ENCODE measurements at regions of chr11 and their contacts with region 1.

Region 1: GRCh38 chr11:10413268-10413667 is 41.8 kb upstream of the AMPD3 start:
- DNase-seq: no peak
- H3K4me3 ChIP-seq: no peak overlapping the region
- H3K27ac ChIP-seq: peak overlapping the region in 1 of 2 donors; percentile 14
- H3K4me1 ChIP-seq: no peaks in the 10 kb centered on the region
- H3K27me3 ChIP-seq: no peaks in the 10 kb centered on the region
- CTCF ChIP-seq: no peak
- POLR2A ChIP-seq: no peak

Region 2: GRCh38 chr11:10514210-10514609 is 100.9 kb after region 1 on chr11:
- intact Hi-C with region 1: loop called (anchors 10 kb)
- DNase-seq: no peak
- H3K4me3 ChIP-seq: no peak overlapping the region
- H3K27ac ChIP-seq: no peak overlapping the region
- H3K4me1 ChIP-seq: no peaks in the 10 kb centered on the region
- H3K27me3 ChIP-seq: no peaks in the 10 kb centered on the region
- CTCF ChIP-seq: peak in 1 of 3 donors; percentile 22
- POLR2A ChIP-seq: no peak

Region 3: GRCh38 chr11:10727146-10727851 is 314.0 kb after region 1 on chr11:
- intact Hi-C with region 1: loop called (anchors 2 kb)
- DNase-seq: no peak
- H3K4me3 ChIP-seq: no peak overlapping the region
- H3K27ac ChIP-seq: no peak overlapping the region
- H3K4me1 ChIP-seq: no peaks in the 10 kb centered on the region
- H3K27me3 ChIP-seq: no peaks in the 10 kb centered on the region
- CTCF ChIP-seq: no peak
- POLR2A ChIP-seq: no peak

Measured in breast epithelium (tissue), 4 donors.